ENCODE measurements at regions of chr21 and their contacts with region 1.

Region 1: GRCh38 chr21:32597205-32597604 is 11.9 kb upstream of the TCP10L start:
- DNase-seq: no peak
- ATAC-seq: no peak
- H3K4me3 ChIP-seq: no peak overlapping the region
- H3K4me3 Mint-ChIP-seq: no peak overlapping the region
- H3K27ac ChIP-seq: no peak overlapping the region
- H3K27ac Mint-ChIP-seq: peak overlapping the region in 1 of 2 donors; percentile 68
- H3K4me1 ChIP-seq: no peaks in the 10 kb centered on the region
- H3K4me1 Mint-ChIP-seq: no peaks in the 10 kb centered on the region
- H3K27me3 ChIP-seq: no peaks in the 10 kb centered on the region
- H3K27me3 Mint-ChIP-seq: no peaks in the 10 kb centered on the region

Region 2: GRCh38 chr21:31258073-31258472 is 1339.1 kb before region 1 on chr21:
- CTCF ChIA-PET with region 1: interaction called in 1 of 2 experiments, 12 read pairs
- POLR2A ChIA-PET with region 1: no interaction called
- DNase-seq: no peak
- ATAC-seq: no peak
- H3K4me3 ChIP-seq: no peak overlapping the region
- H3K4me3 Mint-ChIP-seq: no peak overlapping the region
- H3K27ac ChIP-seq: no peak overlapping the region
- H3K27ac Mint-ChIP-seq: no peak overlapping the region
- H3K4me1 ChIP-seq: no peaks in the 10 kb centered on the region
- H3K4me1 Mint-ChIP-seq: peaks cover 0 to 9% (median 8%) of the 10 kb centered on the region in 3 donors
- H3K27me3 ChIP-seq: no peaks in the 10 kb centered on the region
- H3K27me3 Mint-ChIP-seq: no peaks in the 10 kb centered on the region

Region 3: DNA sequence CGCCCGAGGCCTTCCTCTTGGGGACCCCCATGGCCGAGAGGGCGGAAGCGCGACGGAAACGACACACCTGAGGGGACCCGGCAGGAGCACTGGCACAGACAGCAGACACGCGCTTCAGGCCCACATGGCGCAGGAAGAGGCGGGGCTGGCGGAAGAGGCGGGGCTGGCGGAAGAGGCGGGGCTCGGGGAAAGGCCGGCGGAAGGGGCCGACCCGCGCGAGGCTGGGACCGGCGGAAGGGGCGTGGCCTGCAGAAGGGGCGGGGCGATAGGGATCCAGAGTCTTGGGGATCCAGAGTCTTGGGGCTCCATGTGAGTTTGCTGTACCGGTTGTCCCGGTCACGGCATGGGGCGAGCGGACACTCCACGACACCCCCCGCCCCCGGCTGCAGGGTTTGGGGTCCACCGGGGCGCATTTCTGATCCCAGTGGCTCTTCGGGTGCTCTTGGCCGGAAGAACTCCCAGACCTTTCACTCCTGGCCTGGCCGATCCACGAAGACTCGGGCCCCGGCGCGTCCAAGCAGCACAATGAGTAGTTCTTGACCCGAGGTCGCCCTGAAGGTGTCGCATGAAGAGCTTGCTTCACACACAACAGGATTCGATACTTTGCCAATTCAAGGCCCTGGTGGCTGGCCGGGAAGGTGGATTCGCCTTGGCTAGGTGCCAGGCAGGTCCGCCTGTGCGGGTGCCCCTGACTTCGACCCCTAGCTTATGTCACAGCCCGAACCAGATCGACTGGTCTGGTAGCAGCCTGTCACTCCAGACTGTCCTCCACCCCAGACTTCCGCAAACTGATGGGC is 204.1 kb before region 1 on chr21 and contains the start of gene URB1:
- CTCF ChIA-PET with region 1: interaction called, 6 to 21 read pairs
- POLR2A ChIA-PET with region 1: no interaction called
- DNase-seq: peak; percentile 80 to 97 (median 92)
- ATAC-seq: peak; percentile 92 to 98 (median 98)
- H3K4me3 ChIP-seq: peak within 1 kb of the TSS; percentile 80 to 90
- H3K4me3 Mint-ChIP-seq: peak within 1 kb of the TSS; percentile 82 to 88 (median 83)
- H3K27ac ChIP-seq: peak within 1 kb of the TSS; percentile 72
- H3K27ac Mint-ChIP-seq: peak within 1 kb of the TSS; percentile 66 to 90
- H3K4me1 ChIP-seq: peaks cover 3 to 26% of the 10 kb centered on the region in 2 experiments
- H3K4me1 Mint-ChIP-seq: peaks cover 41 to 50% (median 49%) of the 10 kb centered on the region in 3 donors
- H3K27me3 ChIP-seq: peaks cover 2 to 4% of the 10 kb centered on the region in 2 experiments
- H3K27me3 Mint-ChIP-seq: peaks cover 3 to 9% of the 10 kb centered on the region in 2 donors
- total RNA-seq, gene URB1: 13.4 to 20.2 (median 18.9) TPM

Region 4: GRCh38 chr21:32569261-32570230 is 27.7 kb before region 1 on chr21:
- CTCF ChIA-PET with region 1: interaction called, 6 to 15 read pairs
- POLR2A ChIA-PET with region 1: no interaction called
- DNase-seq: peak; percentile 59 to 93 (median 78)
- ATAC-seq: peak; percentile 84 to 91 (median 88)
- H3K4me3 ChIP-seq: peak overlapping the region; percentile 71 to 74
- H3K4me3 Mint-ChIP-seq: peak overlapping the region; percentile 88 to 96 (median 95)
- H3K27ac ChIP-seq: peak overlapping the region; percentile 64
- H3K27ac Mint-ChIP-seq: peak overlapping the region; percentile 94 to 96
- H3K4me1 ChIP-seq: peaks cover 0 to 14% of the 10 kb centered on the region in 2 experiments
- H3K4me1 Mint-ChIP-seq: peaks cover 12 to 22% (median 21%) of the 10 kb centered on the region in 3 donors
- H3K27me3 ChIP-seq: peaks cover 0 to 10% of the 10 kb centered on the region in 2 experiments
- H3K27me3 Mint-ChIP-seq: no peaks in the 10 kb centered on the region

Measured in T-cell (primary cell).